K562 (cell line): ENCODE measurements at regions of chr11 and their contacts with region 1.

Region 1: GRCh38 chr11:11848891-11849746 is 7.3 kb downstream of the USP47 start:
- DNase-seq: peak; percentile 42 to 86 (median 53)
- ATAC-seq: peak; percentile 85
- H3K4me3 ChIP-seq: no peak overlapping the region
- H3K27ac ChIP-seq: peak overlapping the region; percentile 40
- H3K4me1 ChIP-seq: peaks cover 10 to 56% of the 10 kb centered on the region in 2 experiments; a peak in 4 of 5 replicates
- H3K27me3 ChIP-seq: no peaks in the 10 kb centered on the region
- CTCF ChIP-seq: peak; percentile 83 to 92 (median 85)
- EP300 ChIP-seq: no peak; the same call in 1 of the 2 replicates
- POLR2A ChIP-seq: no peak
- RAD21 ChIP-seq: peak; percentile 67 to 79

Region 2: DNA sequence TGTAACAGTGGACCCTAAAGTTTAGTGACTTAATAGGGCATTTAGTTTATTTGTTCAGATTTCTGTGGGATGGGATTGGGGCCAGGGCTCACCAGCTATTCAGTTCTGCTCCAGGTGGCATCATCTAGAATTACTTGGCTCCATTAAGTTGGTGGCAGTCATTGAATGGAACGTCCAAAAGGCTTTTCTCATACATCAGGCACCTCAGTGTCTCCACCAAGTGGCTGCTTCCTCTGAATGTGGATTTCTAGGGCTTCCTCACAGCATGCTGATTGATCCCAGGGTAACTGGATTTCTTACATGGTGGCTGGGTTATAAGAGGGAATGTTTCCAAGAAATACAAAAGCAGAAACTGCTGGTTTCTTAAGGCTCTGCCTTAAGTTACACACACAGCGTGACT is 27.3 kb after region 1 on chr11:
- CTCF ChIA-PET with region 1: no interaction called
- POLR2A ChIA-PET with region 1: interaction called, 5 read pairs
- in situ Hi-C with region 1: no loop called
- intact Hi-C with region 1: loop called (anchors 2 kb)
- DNase-seq: peak in 3 of 4 experiments; percentile 16 to 59 (median 21)
- ATAC-seq: peak; percentile 80
- H3K4me3 ChIP-seq: no peak overlapping the region
- H3K27ac ChIP-seq: no peak overlapping the region
- H3K4me1 ChIP-seq: no peaks in the 10 kb centered on the region; a peak in 2 of 5 replicates
- H3K27me3 ChIP-seq: no peaks in the 10 kb centered on the region
- CTCF ChIP-seq: peak; percentile 58 to 61 (median 58)
- EP300 ChIP-seq: no peak
- POLR2A ChIP-seq: no peak
- RAD21 ChIP-seq: peak; percentile 24 to 56; a peak in 3 of 4 replicates

Region 3: DNA sequence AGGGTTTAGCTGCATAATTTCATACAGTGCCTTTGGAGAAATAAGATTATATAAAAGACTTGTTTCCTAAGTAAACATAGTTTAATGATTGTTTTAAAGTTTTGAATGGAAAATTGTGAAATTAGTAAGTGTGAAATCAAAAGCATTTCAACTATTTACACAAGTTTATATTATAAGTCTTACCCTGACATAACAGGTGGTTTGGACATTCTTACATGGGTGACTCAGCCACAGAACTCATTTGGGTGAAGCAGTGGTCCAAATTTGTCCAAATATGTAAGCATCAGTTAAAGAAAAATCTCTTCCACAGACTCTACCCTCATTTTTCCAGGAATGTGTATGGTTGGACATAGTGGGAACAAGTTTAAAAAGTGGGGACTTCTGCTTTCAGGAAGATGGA is 60.6 kb after region 1 on chr11:
- CTCF ChIA-PET with region 1: no interaction called
- POLR2A ChIA-PET with region 1: no interaction called
- in situ Hi-C with region 1: no loop called
- intact Hi-C with region 1: no loop called
- DNase-seq: no peak
- ATAC-seq: no peak
- H3K4me3 ChIP-seq: no peak overlapping the region
- H3K27ac ChIP-seq: no peak overlapping the region
- H3K4me1 ChIP-seq: no peaks in the 10 kb centered on the region
- H3K27me3 ChIP-seq: no peaks in the 10 kb centered on the region
- CTCF ChIP-seq: no peak
- EP300 ChIP-seq: no peak
- POLR2A ChIP-seq: no peak
- RAD21 ChIP-seq: no peak